AG04450 (cell line): ENCODE measurements at regions of chr1 and their contacts with region 1.

Region 1: DNA sequence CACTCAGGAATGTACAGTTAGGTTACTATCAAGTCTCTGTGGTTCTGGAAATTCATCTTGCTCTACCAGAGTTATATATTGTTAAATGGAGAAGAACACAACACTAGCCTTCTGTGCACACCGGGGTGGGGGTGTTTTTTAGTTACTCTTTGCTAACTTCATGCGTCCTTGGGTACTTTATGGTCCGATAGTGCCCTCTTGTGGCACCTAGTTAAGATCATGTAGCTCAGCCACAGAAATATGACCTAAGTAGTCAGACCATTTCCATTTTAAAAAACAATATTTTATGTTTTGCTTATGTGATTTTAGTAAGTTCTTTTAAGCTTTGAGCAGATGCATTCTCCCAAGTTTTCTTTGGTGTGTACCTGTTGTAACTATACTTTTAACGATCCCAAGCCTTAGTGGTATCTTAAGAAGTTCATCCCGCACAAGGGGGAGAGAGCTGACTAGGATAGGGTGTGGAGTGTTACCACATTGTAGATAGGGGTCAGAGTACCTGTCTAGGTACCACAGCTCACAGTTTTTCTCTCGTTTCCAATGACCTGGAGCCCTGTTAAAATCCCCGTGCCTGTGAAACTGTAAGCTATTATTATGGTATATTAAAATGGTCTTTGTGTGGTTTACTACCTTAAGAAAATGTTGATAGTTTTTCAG is 20.6 kb upstream of the SH3D21 start:
- DNase-seq: peak; percentile 81
- H3K4me3 ChIP-seq: no peak overlapping the region
- H3K27ac ChIP-seq: no peak overlapping the region
- H3K27me3 ChIP-seq: no peaks in the 10 kb centered on the region
- CTCF ChIP-seq: peak; percentile 74

Region 2: DNA sequence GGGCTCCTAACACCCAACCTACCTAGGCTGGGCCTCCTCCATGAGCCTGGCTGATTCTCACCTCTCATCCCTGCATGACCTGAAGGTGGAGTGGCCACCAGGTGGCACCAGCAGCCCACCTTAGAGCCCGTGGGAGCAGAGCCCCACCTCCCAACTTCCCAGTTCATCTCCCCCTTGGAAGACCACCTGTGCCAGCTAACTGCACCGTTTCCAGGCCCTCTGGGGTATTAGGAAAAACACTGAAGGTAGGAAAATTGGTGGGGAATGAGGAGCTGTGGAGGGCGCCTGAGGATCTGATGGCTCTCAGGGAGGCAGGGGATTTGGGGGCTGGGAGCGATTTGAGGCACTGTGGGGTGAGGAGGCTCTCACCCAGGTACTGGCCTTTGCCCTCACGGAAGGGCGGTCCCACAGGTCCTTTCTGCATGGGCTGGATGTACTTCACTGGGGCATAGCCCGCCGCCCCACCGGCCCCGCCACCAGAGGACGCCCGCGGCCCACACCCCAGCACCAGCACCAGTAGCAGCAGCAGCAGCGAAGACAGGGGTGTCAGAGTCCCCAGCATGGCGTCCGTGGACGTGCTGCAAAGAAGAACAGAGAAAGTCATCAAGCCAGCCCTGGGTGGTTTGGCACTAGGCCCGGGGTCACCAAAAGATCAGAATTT is 185.8 kb before region 1 on chr1:
- CTCF ChIA-PET with region 1: interaction called, 18 read pairs
- POLR2A ChIA-PET with region 1: no interaction called
- DNase-seq: peak; percentile 45
- H3K4me3 ChIP-seq: no peak overlapping the region
- H3K27ac ChIP-seq: no peak overlapping the region
- H3K27me3 ChIP-seq: no peaks in the 10 kb centered on the region
- CTCF ChIP-seq: peak; percentile 86

Region 3: GRCh38 chr1:36160949-36161485 is 124.6 kb before region 1 on chr1:
- CTCF ChIA-PET with region 1: interaction called, 12 read pairs
- POLR2A ChIA-PET with region 1: interaction called, 8 read pairs
- DNase-seq: no peak
- H3K4me3 ChIP-seq: peak overlapping the region; percentile 66
- H3K27ac ChIP-seq: peak overlapping the region; percentile 78
- H3K27me3 ChIP-seq: no peaks in the 10 kb centered on the region
- CTCF ChIP-seq: peak; percentile 56

Region 4: GRCh38 chr1:36258962-36259349 is 26.6 kb before region 1 on chr1:
- CTCF ChIA-PET with region 1: interaction called, 14 read pairs
- POLR2A ChIA-PET with region 1: no interaction called
- DNase-seq: no peak
- H3K4me3 ChIP-seq: no peak overlapping the region
- H3K27ac ChIP-seq: no peak overlapping the region
- H3K27me3 ChIP-seq: no peaks in the 10 kb centered on the region
- CTCF ChIP-seq: no peak

Region 5: GRCh38 chr1:36300526-36300925 is 15.0 kb after region 1 on chr1:
- CTCF ChIA-PET with region 1: interaction called, 25 read pairs
- POLR2A ChIA-PET with region 1: no interaction called
- DNase-seq: no peak
- H3K4me3 ChIP-seq: no peak overlapping the region
- H3K27ac ChIP-seq: peak overlapping the region; percentile 1
- H3K27me3 ChIP-seq: no peaks in the 10 kb centered on the region
- CTCF ChIP-seq: no peak